BJ (cell line): ENCODE measurements at regions of chr2 and their contacts with region 1.

Region 1: DNA sequence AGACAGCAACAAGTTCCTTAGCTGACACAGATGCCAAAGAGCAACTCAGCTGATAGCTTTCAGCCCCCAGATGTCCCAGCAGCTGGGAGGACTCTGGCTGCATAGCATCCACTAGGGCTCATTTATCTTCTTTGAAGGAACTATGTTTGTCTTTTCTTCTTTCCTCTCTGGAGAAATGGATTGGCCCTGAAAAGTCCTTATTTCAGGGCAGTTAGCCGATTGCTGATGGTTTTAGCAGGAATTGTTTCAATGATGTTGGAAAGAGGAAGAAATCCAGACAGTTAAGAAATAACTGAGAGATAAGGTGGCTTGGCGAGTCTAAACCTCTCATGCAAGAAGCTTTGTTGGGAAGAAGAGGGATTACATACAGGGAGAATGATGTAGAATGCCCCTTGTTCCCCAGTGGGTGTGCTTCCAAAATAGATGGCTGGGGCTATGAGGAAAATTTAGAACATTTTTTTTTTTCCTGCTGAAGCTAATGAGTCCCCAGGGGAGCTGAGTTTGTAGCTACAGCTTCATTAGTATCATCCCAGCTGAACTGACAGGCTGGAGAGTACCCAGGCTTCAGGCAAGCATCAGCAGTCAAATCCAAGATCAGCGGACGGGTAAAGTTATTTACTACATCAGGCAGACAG is 33.6 kb upstream of the SERPINE2 start:
- DNase-seq: no peak
- H3K4me3 ChIP-seq: no peak overlapping the region
- H3K27me3 ChIP-seq: no peaks in the 10 kb centered on the region
- CTCF ChIP-seq: no peak

Region 2: DNA sequence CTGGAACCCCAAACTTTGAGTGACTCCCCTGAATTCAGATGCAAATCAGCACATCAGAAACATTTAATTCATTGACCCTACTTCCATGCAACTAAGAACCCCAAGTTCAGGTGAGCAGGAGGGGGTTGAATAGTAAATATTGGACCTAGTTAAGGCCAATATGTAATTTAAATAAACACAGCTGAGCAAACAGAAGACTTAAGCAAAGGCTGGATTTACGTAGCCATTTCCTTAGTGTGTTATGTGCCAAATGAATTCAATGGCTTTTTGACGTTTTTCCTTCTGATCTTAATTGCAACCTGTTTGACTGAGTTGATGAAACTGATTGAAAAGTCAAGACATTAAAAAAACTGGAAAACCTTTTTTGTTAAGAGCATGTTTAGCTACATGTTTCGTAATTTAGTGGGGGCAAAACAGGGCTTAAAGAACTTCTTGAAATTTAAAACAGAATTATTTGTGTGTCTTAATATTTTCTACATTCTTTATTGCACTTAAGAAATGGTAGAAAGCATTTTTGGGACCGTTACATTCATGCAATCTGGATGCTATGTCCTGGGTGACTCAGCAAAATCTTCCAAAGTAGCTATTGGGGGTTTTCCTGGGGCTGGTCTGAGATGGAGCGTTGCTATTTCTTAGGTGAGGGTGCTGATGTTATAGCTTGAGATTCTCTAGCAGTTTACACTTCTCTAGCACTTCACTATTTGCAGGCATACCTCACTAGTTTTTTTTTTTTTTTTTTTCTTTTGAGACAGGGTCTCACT is 1046.1 kb before region 1 on chr2:
- CTCF ChIA-PET with region 1: no interaction called
- POLR2A ChIA-PET with region 1: interaction called, 13 read pairs
- DNase-seq: no peak
- H3K4me3 ChIP-seq: no peak overlapping the region
- H3K27me3 ChIP-seq: no peaks in the 10 kb centered on the region
- CTCF ChIP-seq: no peak

Region 3: DNA sequence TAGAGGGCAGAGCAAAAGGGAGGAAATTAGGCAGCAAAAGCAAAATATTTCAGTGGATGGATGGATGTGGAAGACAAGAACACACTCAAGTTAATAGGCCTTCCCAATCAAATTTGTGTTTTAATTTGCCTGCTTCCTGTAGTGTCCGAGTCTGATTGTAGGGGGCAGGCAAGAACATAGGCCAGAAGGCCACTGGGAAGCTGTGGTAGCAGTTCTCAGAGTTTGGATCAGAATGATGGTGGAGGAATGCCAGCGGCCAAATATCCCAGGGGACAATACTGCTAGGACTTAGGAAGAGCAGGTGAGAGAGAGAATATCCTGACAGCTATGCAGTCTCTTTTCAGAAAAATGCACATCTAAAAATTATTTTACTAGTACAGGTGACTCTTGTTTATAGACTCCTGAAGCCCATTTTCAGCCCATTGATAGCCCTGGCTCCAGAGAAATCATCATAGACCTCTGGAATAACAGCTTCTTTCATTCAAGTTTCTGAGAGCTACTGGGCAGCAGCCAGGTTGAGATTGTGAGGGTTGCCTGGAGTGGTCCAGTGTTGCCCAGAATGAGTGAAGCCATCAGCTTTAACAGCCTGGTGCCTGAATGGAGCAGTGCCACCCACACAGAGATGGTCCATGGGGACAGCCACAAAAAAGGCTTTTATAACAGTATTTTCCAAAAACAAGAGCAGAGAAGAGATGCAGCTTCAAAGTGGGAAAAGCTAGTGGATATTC is 14.5 kb before region 1 on chr2:
- CTCF ChIA-PET with region 1: interaction called, 22 read pairs
- POLR2A ChIA-PET with region 1: no interaction called
- DNase-seq: no peak
- H3K4me3 ChIP-seq: no peak overlapping the region
- H3K27me3 ChIP-seq: no peaks in the 10 kb centered on the region
- CTCF ChIP-seq: no peak

Region 4: DNA sequence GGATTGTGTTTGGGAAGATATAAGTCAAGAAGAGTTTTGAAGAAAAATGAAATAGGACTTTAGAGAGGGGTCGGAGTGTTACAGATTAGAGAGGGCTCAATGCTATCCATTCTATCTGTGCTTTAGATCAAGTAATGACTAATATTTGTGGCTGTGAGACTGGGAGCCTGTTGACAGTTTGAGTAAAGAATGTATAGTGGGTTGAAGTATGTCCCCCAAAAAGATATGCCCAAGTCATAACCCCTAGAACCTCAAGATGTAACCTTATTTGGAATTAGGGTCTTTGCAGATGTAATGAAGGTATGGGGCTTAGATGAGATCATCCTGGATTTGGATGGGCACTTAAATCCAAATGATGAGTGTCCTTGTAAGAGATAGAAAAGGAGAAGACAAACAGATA is 21.7 kb after region 1 on chr2:
- CTCF ChIA-PET with region 1: no interaction called
- POLR2A ChIA-PET with region 1: no interaction called
- DNase-seq: no peak
- H3K4me3 ChIP-seq: no peak overlapping the region
- H3K27me3 ChIP-seq: no peaks in the 10 kb centered on the region
- CTCF ChIP-seq: no peak